ENCODE measurements at regions of chr9 and their contacts with region 1.

Region 1: DNA sequence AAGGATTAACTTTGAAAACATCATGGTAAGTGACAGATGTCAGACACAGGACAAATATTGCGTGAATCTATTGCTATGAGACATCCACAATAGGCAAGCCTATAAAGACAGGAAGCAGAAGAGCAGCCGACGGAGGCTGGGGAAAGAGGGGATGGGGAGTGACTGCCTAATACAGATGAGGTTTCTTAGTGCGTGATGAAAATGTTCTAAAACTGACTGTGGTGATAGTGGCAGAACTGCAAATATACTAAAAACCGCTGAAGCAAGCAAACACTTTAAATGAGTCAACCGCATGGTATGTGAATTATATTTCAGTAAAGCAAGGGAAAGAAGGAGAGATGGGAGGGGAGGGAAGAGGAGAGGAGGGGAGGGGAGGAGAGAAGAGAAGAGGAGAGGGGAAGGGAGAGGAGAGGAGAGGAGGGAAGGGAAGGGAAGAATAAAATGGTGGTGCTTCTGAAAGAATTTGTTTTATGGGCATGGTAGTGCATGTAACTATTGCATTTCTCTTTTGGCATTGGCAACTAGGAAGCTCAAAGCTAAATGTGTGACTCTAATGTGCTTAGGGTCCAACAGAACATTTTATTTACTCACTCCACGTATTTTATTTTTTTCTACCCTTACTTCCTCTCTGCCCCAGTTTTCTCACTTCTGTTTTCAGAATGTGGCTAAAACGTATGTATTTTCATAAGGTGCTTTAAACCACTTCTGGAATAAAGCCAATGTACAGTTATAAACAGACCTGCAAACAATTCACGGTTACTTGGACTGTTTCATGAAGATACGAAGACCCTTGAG is 21.3 kb downstream of the AKNA start:
- DNase-seq: peak; percentile 68
- H3K4me3 ChIP-seq: peak overlapping the region; percentile 53
- H3K27ac ChIP-seq: peak overlapping the region; percentile 99
- H3K4me1 ChIP-seq: peaks cover 88% of the 10 kb centered on the region
- CTCF ChIP-seq: no peak

Region 2: GRCh38 chr9:113876151-113876992 is 490.2 kb before region 1 on chr9 and contains the start of gene ZNF618:
- CTCF ChIA-PET with region 1: no interaction called
- POLR2A ChIA-PET with region 1: no interaction called
- intact Hi-C with region 1: no loop called
- DNase-seq: peak; percentile 48
- H3K4me3 ChIP-seq: peak within 1 kb of the TSS; percentile 71
- H3K27ac ChIP-seq: no peak within 1 kb of the TSS
- H3K4me1 ChIP-seq: no peaks in the 10 kb centered on the region
- CTCF ChIP-seq: peak; percentile 80
- total RNA-seq, gene ZNF618: not detected in 2 replicates

Region 3: GRCh38 chr9:114348906-114349482 is 17.5 kb before region 1 on chr9:
- CTCF ChIA-PET with region 1: no interaction called
- POLR2A ChIA-PET with region 1: interaction called, 11 read pairs
- intact Hi-C with region 1: no loop called
- DNase-seq: peak; percentile 83
- H3K4me3 ChIP-seq: no peak overlapping the region
- H3K27ac ChIP-seq: peak overlapping the region; percentile 60
- H3K4me1 ChIP-seq: peaks cover 25% of the 10 kb centered on the region
- CTCF ChIP-seq: no peak

Region 4: DNA sequence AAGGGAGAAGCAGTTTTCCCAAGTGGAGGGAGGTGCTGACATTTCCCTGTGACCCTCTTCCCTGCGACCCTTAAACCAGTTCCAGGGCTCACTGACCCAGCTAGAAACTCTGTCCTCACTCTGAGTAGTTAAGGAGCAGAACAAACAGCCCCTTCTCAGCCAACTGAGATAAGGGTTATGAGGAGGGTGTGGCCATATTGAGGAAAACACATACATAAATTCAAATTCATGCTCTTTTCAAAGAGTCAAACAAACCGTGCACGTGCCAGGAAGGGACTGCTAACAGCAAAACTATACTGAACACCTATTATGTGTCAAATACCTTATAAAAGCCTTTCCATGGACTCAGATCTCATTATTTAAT is 26.2 kb after region 1 on chr9:
- CTCF ChIA-PET with region 1: interaction called, 15 read pairs
- POLR2A ChIA-PET with region 1: interaction called, 275 read pairs
- intact Hi-C with region 1: loop called (anchors 1 kb)
- DNase-seq: peak; percentile 64
- H3K4me3 ChIP-seq: peak overlapping the region; percentile 16
- H3K27ac ChIP-seq: peak overlapping the region; percentile 97
- H3K4me1 ChIP-seq: peaks cover 89% of the 10 kb centered on the region
- CTCF ChIP-seq: no peak

Measured in OCI-LY7 (cell line).